GM12878 (cell line): ENCODE measurements at regions of chr11 and their contacts with region 1.

Region 1: DNA sequence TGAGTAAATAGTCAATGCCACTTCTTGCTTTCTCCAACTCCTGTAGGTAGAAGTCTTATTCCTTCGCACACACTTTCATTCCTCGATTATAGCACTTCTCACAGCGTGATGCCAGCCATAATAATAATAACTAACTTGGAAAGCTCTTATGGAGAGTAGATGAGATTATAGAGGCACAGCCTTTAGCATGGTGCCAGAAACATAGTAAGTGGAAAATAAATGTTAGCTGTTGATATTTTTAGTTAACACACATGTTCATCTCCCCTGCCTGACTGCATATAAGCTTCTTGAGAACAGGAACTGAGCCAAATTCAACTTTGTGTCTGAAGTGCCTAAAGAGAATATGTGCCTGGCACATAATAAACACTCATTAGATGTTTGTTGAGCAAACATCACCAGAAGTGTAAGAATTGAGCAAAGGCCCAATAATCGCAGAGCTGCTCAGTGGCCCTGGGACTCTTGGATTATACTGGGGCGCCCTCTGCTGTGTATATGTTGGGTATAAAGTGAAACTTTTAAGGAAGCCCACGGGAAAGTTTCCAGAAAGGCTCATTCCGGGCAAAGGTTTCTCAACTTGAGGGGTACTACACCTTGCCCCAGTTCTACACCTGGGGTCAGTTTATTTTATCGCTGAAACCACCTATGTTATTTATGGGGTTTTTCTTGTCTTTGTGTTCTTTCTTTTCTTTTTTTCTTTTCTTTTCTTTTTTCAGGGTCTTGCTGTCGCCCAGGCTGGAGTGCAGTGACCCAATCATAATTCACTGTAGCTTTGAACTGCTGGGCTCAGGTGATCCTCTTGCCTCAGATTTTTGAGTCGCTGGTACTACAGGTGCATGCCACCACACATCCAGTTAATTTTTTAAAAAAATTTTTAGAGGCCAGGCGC is 22.3 kb downstream of the SLN start:
- DNase-seq: no peak
- ATAC-seq: peak; percentile 95
- H3K4me3 ChIP-seq: no peak overlapping the region
- H3K27ac ChIP-seq: no peak overlapping the region
- H3K4me1 ChIP-seq: no peaks in the 10 kb centered on the region
- H3K27me3 ChIP-seq: no peaks in the 10 kb centered on the region
- CTCF ChIP-seq: peak; percentile 50 to 86 (median 63)
- EP300 ChIP-seq: no peak
- POLR2A ChIP-seq: no peak
- RAD21 ChIP-seq: peak; percentile 88

Region 2: GRCh38 chr11:107538821-107539220 is 150.7 kb before region 1 on chr11:
- CTCF ChIA-PET with region 1: interaction called, 159 read pairs
- POLR2A ChIA-PET with region 1: no interaction called
- RAD21 ChIA-PET with region 1: interaction called, 3 read pairs
- SMC1A ChIA-PET with region 1: interaction called, 11 read pairs
- in situ Hi-C with region 1: no loop called
- intact Hi-C with region 1: no loop called
- DNase-seq: no peak
- ATAC-seq: no peak
- H3K4me3 ChIP-seq: no peak overlapping the region
- H3K27ac ChIP-seq: no peak overlapping the region
- H3K4me1 ChIP-seq: no peaks in the 10 kb centered on the region
- H3K27me3 ChIP-seq: no peaks in the 10 kb centered on the region
- CTCF ChIP-seq: no peak
- EP300 ChIP-seq: no peak
- POLR2A ChIP-seq: no peak
- RAD21 ChIP-seq: no peak

Region 3: DNA sequence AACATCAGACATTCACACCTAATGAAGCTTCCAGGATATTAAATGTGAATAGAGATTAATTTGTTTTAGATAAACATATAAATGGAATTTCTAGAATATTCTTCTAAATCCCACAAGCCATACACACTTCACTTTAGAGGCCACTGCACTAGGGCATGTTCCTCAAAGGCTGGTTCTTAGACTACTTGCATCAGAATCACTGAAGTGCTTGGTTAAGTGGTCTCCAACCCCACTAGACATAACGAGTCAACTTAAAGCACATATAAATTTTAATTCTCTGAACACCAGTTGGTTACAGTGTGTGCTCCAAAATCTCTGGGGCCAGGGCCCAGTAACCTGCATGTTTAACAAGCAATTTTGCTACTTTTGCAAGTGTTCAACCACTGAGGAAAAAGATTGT is 116.1 kb before region 1 on chr11:
- CTCF ChIA-PET with region 1: interaction called, 536 read pairs
- POLR2A ChIA-PET with region 1: no interaction called
- RAD21 ChIA-PET with region 1: interaction called, 120 read pairs
- SMC1A ChIA-PET with region 1: interaction called, 249 read pairs
- in situ Hi-C with region 1: loop called (anchors 5 kb)
- intact Hi-C with region 1: loop called (anchors 1 kb)
- DNase-seq: no peak
- ATAC-seq: no peak
- H3K4me3 ChIP-seq: no peak overlapping the region
- H3K27ac ChIP-seq: no peak overlapping the region
- H3K4me1 ChIP-seq: no peaks in the 10 kb centered on the region; the same call in 1 of the 2 replicates
- H3K27me3 ChIP-seq: no peaks in the 10 kb centered on the region
- CTCF ChIP-seq: no peak
- EP300 ChIP-seq: no peak
- POLR2A ChIP-seq: no peak
- RAD21 ChIP-seq: no peak

Region 4: DNA sequence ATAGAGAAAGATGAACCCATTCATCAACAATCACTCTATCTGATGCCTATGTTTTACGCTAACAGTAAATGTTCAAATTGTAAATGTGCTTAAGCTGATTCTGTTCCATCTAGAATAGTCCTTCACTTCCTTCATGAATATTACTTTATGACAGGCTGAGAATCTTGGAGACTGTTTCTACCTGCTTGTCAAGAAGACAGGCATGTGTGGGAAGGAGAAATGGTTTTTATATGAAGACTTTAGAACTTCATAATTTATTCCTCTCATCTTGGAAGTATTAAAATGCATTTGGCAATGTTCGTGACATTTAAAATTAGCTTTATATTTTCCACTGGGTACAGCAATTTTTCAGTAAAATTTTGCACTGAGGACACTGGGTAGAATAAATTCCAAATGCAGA is 57.6 kb before region 1 on chr11:
- CTCF ChIA-PET with region 1: interaction called, 8 read pairs
- POLR2A ChIA-PET with region 1: no interaction called
- RAD21 ChIA-PET with region 1: interaction called, 4 read pairs
- SMC1A ChIA-PET with region 1: interaction called, 10 read pairs
- in situ Hi-C with region 1: no loop called
- intact Hi-C with region 1: no loop called
- DNase-seq: no peak
- ATAC-seq: no peak
- H3K4me3 ChIP-seq: no peak overlapping the region
- H3K27ac ChIP-seq: no peak overlapping the region
- H3K4me1 ChIP-seq: no peaks in the 10 kb centered on the region
- H3K27me3 ChIP-seq: no peaks in the 10 kb centered on the region; a peak in 1 of 4 replicates
- CTCF ChIP-seq: no peak
- EP300 ChIP-seq: no peak
- POLR2A ChIP-seq: no peak
- RAD21 ChIP-seq: no peak

Region 5: GRCh38 chr11:107669893-107670601 is 19.5 kb before region 1 on chr11:
- CTCF ChIA-PET with region 1: interaction called, 58 read pairs
- POLR2A ChIA-PET with region 1: no interaction called
- RAD21 ChIA-PET with region 1: interaction called, 15 read pairs
- SMC1A ChIA-PET with region 1: interaction called, 57 read pairs
- in situ Hi-C with region 1: no loop called
- intact Hi-C with region 1: no loop called
- DNase-seq: no peak
- ATAC-seq: peak; percentile 54
- H3K4me3 ChIP-seq: no peak overlapping the region
- H3K27ac ChIP-seq: no peak overlapping the region
- H3K4me1 ChIP-seq: no peaks in the 10 kb centered on the region
- H3K27me3 ChIP-seq: no peaks in the 10 kb centered on the region; a peak in 1 of 4 replicates
- CTCF ChIP-seq: no peak
- EP300 ChIP-seq: no peak
- POLR2A ChIP-seq: no peak
- RAD21 ChIP-seq: no peak

Region 6: GRCh38 chr11:107741044-107741823 is 51.7 kb after region 1 on chr11:
- CTCF ChIA-PET with region 1: interaction called, 18 read pairs
- POLR2A ChIA-PET with region 1: no interaction called
- RAD21 ChIA-PET with region 1: interaction called, 5 read pairs
- SMC1A ChIA-PET with region 1: interaction called, 18 read pairs
- in situ Hi-C with region 1: loop called (anchors 5 kb)
- intact Hi-C with region 1: no loop called
- DNase-seq: peak; percentile 25
- ATAC-seq: peak; percentile 98
- H3K4me3 ChIP-seq: no peak overlapping the region
- H3K27ac ChIP-seq: no peak overlapping the region
- H3K4me1 ChIP-seq: no peaks in the 10 kb centered on the region
- H3K27me3 ChIP-seq: no peaks in the 10 kb centered on the region
- CTCF ChIP-seq: peak; percentile 80 to 92 (median 87)
- EP300 ChIP-seq: no peak
- POLR2A ChIP-seq: no peak
- RAD21 ChIP-seq: peak; percentile 81